Adrenal gland (tissue), 19 donors: ENCODE measurements at regions of chr20 and their contacts with region 1.

Region 1: GRCh38 chr20:34069341-34070078 is 42.5 kb downstream of the EIF2S2 start:
- DNase-seq: peak; percentile 68 to 92 (median 81)
- H3K4me3 ChIP-seq: no peak overlapping the region
- H3K27ac ChIP-seq: no peak overlapping the region
- H3K4me1 ChIP-seq: peaks cover 9 to 17% of the 10 kb centered on the region in 2 donors
- H3K27me3 ChIP-seq: no peaks in the 10 kb centered on the region
- CTCF ChIP-seq: peak; percentile 67 to 94 (median 90)
- POLR2A ChIP-seq: no peak

Region 2: DNA sequence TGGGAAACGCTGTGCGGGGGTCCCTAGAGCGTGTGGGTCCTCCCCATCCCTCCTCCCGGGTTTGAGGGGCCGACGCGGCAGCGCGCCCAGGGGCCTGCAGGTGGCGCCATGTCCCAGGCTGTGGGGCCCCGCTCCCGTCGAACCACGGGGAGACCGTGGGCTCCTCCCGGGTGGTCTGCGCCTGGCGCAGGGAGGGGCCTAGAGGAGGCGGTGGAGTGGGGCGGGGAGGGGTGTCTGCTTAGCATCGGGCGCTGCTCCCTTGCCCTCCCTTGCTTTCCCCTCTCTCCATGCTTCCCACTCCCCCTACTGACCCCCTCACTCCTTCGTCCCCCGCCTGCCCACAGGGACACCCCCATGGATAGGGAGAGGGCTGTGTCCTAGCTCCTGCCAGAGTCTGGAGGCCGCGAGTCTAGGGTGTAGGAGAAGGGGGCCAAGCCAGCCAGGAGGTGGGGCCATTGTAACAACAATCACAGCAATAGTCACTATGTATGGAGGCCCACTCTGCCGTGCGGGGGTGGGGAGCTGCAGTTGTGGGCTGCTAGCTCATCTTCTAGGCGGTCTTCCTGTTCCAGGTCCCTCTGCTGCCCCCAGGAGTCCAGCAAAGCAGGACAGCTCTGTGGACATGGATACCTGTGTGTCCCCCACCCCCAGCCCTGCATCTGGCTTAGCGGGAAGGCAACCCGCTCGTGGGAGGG is 206.7 kb before region 1 on chr20:
- intact Hi-C with region 1: loop called in 1 of 2 experiments (anchors 5 kb)
- DNase-seq: peak; percentile 22 to 67 (median 39)
- H3K4me3 ChIP-seq: no peak overlapping the region
- H3K27ac ChIP-seq: no peak overlapping the region
- H3K4me1 ChIP-seq: peaks cover 0 to 6% of the 10 kb centered on the region in 2 donors
- H3K27me3 ChIP-seq: no peaks in the 10 kb centered on the region
- CTCF ChIP-seq: peak in 5 of 6 experiments; percentile 46 to 68 (median 57)
- POLR2A ChIP-seq: no peak

Region 3: GRCh38 chr20:33933469-33933909 is 136.0 kb before region 1 on chr20:
- intact Hi-C with region 1: loop called (anchors 2 to 10 kb)
- DNase-seq: peak; percentile 59 to 89 (median 83)
- H3K4me3 ChIP-seq: no peak overlapping the region
- H3K27ac ChIP-seq: peak overlapping the region in 2 of 5 donors; percentile 32 to 48
- H3K4me1 ChIP-seq: no peaks in the 10 kb centered on the region
- H3K27me3 ChIP-seq: no peaks in the 10 kb centered on the region
- CTCF ChIP-seq: peak; percentile 26 to 77 (median 68)
- POLR2A ChIP-seq: no peak

Region 4: GRCh38 chr20:33971147-33971975 is 98.1 kb before region 1 on chr20:
- intact Hi-C with region 1: no loop called
- DNase-seq: no peak
- H3K4me3 ChIP-seq: no peak overlapping the region
- H3K27ac ChIP-seq: no peak overlapping the region
- H3K4me1 ChIP-seq: no peaks in the 10 kb centered on the region
- H3K27me3 ChIP-seq: no peaks in the 10 kb centered on the region
- CTCF ChIP-seq: no peak
- POLR2A ChIP-seq: no peak

Region 5: DNA sequence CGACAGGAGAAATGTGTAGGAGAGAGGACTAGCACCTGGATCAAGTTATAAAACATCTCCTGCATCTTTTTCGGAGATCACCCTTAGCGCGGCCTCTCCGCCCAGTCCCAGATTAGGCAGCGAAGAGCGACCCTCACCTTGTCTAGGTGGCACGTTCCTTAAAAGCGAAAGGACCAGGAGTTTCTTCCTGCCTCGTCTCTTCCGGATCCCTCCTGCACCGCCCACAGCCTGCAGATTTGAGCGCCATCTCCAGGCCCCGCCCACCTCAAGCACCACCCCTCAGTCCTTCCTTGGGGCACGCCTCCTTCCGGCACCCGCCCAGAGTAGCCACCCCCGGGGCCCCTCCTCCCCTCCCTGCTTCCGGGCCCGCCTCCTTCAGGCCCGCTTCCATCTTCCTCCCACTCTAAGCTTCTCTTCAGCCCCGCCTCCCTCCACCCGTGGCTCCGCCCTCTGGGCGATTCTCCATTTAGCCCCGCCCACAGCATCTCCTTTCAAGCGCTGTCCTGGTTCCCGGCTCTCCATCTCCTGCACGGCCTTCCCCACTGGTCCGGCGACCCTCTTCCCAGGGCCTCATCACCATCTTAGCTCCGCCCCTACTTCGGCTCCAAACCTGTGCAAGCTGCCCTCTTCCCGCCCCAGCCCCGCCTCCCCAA is 76.5 kb before region 1 on chr20:
- intact Hi-C with region 1: loop called in 1 of 2 experiments (anchors 10 kb)
- DNase-seq: peak; percentile 99 to 100 (median 100)
- H3K4me3 ChIP-seq: peak overlapping the region in 3 of 4 donors; percentile 54 to 88 (median 65)
- H3K27ac ChIP-seq: peak overlapping the region; percentile 81 to 97 (median 96)
- H3K4me1 ChIP-seq: peaks cover 24 to 35% of the 10 kb centered on the region in 2 donors
- H3K27me3 ChIP-seq: no peaks in the 10 kb centered on the region
- CTCF ChIP-seq: no peak
- POLR2A ChIP-seq: peak; percentile 48 to 86